IMR-90 (cell line): ENCODE measurements at regions of chr5 and their contacts with region 1.

Region 1: GRCh38 chr5:65305913-65306312 is 175.8 kb downstream of the ADAMTS6 start:
- DNase-seq: peak; percentile 84
- ATAC-seq: peak; percentile 79
- H3K4me3 ChIP-seq: no peak overlapping the region
- H3K27ac ChIP-seq: no peak overlapping the region
- H3K4me1 ChIP-seq: peaks cover 9% of the 10 kb centered on the region; the same call in 1 of the 2 replicates
- H3K27me3 ChIP-seq: no peaks in the 10 kb centered on the region
- CTCF ChIP-seq: no peak
- POLR2A ChIP-seq: no peak
- RAD21 ChIP-seq: no peak

Region 2: GRCh38 chr5:64814073-64814472 is 491.8 kb before region 1 on chr5:
- CTCF ChIA-PET with region 1: no interaction called
- POLR2A ChIA-PET with region 1: no interaction called
- dilution Hi-C with region 1: no loop called
- in situ Hi-C with region 1: no loop called
- intact Hi-C with region 1: no loop called
- DNase-seq: no peak
- ATAC-seq: no peak
- H3K4me3 ChIP-seq: no peak overlapping the region
- H3K27ac ChIP-seq: no peak overlapping the region
- H3K4me1 ChIP-seq: no peaks in the 10 kb centered on the region; the same call in 1 of the 2 replicates
- H3K27me3 ChIP-seq: no peaks in the 10 kb centered on the region
- CTCF ChIP-seq: no peak
- POLR2A ChIP-seq: no peak
- RAD21 ChIP-seq: no peak

Region 3: GRCh38 chr5:65190328-65191053 is 115.4 kb before region 1 on chr5:
- CTCF ChIA-PET with region 1: interaction called, 3 read pairs
- POLR2A ChIA-PET with region 1: no interaction called
- dilution Hi-C with region 1: no loop called
- in situ Hi-C with region 1: no loop called
- intact Hi-C with region 1: loop called (anchors 5 kb)
- DNase-seq: peak; percentile 99
- ATAC-seq: peak; percentile 79
- H3K4me3 ChIP-seq: no peak overlapping the region
- H3K27ac ChIP-seq: peak overlapping the region; percentile 28
- H3K4me1 ChIP-seq: peaks cover 8% of the 10 kb centered on the region
- H3K27me3 ChIP-seq: no peaks in the 10 kb centered on the region
- CTCF ChIP-seq: no peak
- POLR2A ChIP-seq: peak; percentile 59; the same call in 1 of the 2 replicates
- RAD21 ChIP-seq: no peak

Region 4: GRCh38 chr5:65356282-65356681 is 50.4 kb after region 1 on chr5:
- CTCF ChIA-PET with region 1: no interaction called
- POLR2A ChIA-PET with region 1: no interaction called
- dilution Hi-C with region 1: no loop called
- in situ Hi-C with region 1: no loop called
- intact Hi-C with region 1: no loop called
- DNase-seq: no peak
- ATAC-seq: no peak; the same call in 1 of the 2 replicates
- H3K4me3 ChIP-seq: no peak overlapping the region
- H3K27ac ChIP-seq: no peak overlapping the region
- H3K4me1 ChIP-seq: no peaks in the 10 kb centered on the region
- H3K27me3 ChIP-seq: no peaks in the 10 kb centered on the region
- CTCF ChIP-seq: no peak
- POLR2A ChIP-seq: no peak
- RAD21 ChIP-seq: no peak